ENCODE measurements at regions of chr11 and their contacts with region 1.

Region 1: DNA sequence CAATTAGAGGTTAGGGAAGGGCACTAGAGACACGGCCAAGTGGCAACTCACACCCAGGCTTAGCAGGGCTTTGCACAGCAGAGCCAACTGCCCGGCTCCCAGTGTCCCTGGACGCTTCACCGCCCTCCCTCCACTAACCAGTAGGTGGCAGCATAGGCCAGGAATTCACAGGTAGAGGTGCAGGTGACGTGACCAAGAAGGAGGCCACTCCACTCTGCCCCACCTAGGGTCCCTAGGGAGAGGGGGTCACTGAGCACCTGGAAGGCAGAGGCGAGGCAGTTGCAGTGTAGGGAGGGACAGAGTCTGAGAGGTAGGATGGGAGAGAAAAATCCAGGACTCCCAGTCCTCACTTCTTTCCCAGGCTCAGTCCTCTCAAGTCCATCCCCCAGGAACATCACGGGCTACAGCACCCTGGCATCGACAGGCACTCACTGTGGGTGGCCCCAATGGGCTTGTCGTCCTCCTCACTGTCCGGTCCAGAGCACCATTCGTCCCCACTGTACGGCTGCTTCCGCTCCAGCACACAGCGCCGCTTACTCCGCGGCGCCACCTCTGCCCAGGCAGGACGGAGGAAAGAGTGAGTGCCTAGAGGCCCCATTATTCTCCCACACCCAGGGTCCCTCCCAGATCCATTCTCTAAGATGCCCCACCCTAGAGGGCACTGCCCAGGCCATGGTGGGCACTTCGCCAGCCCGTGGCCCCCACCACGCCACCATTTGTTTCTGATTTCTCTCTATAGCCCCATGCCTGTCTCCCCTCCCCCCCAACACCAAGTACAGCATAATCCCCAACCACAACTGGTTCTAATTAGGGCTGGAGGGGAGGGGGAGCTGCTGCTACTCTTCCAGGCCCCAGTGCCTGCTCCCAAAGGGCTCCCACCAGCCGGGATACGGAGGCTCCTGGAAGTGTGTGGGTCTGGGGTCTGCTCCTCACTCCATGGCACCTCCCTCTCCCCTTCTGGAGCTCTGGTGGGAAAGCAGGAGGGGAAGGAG is 18.4 kb downstream of the BCL9L start:
- DNase-seq: peak; percentile 85 to 87
- H3K4me3 ChIP-seq: no peak overlapping the region
- H3K27ac ChIP-seq: peak overlapping the region; percentile 99 to 100
- H3K4me1 ChIP-seq: peaks cover 4 to 23% of the 10 kb centered on the region in 2 donors
- H3K27me3 ChIP-seq: no peaks in the 10 kb centered on the region
- CTCF ChIP-seq: peak; percentile 87 to 98 (median 96)
- POLR2A ChIP-seq: peak in 1 of 2 donors; percentile 14

Region 2: GRCh38 chr11:118859973-118860372 is 47.4 kb before region 1 on chr11:
- intact Hi-C with region 1: no loop called
- DNase-seq: no peak
- H3K4me3 ChIP-seq: no peak overlapping the region
- H3K27ac ChIP-seq: no peak overlapping the region
- H3K4me1 ChIP-seq: no peaks in the 10 kb centered on the region
- H3K27me3 ChIP-seq: no peaks in the 10 kb centered on the region
- CTCF ChIP-seq: no peak
- POLR2A ChIP-seq: no peak

Region 3: DNA sequence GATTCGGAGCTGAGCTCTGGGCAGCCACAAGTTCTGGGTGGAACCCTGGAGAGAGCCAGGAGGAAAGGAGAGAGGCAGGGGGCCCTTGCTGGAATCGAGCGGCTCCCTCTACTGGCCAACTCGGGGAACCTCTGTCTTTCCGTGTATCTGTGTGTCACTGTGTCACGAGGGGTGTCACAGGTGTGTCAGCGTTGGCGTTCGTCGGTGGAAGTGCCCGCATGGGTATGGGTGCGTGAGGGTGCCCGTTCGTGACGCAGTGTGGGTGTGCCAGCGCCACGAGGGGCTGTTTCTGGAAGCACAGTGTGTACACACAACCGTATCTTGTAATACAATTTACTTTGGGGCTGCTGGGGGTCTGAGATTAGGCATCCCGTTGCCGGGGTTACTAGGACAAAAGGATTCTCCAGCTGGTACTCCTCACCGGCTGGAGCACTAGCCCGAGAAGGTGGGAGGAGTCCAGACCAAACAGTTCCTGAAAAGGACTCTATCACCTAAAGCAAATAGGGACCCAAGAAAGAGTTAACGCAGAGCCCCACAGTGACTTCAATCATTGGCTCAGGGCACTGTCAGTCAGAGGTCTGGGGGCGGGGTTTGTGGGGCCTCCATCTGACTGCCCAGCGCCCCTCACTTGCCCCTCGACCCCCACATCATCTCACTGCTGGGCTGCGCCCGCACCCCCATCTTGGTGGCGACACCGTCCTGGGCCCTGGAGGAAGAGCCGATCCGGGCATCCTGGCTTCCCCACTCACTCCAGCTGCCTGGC is 20.9 kb after region 1 on chr11:
- intact Hi-C with region 1: loop called (anchors 2 kb)
- DNase-seq: peak; percentile 93 to 96
- H3K4me3 ChIP-seq: peak overlapping the region; percentile 89 to 90
- H3K27ac ChIP-seq: peak overlapping the region; percentile 98 to 99
- H3K4me1 ChIP-seq: peaks cover 0 to 16% of the 10 kb centered on the region in 2 donors
- H3K27me3 ChIP-seq: no peaks in the 10 kb centered on the region
- CTCF ChIP-seq: peak; percentile 88 to 96 (median 94)
- POLR2A ChIP-seq: peak in 1 of 2 donors; percentile 48